B cell (primary cell): ENCODE measurements at regions of chr19 and their contacts with region 1.

Region 1: GRCh38 chr19:15177269-15178116 is 23.3 kb downstream of the NOTCH3 start:
- DNase-seq: peak; percentile 91
- ATAC-seq: peak; percentile 100
- H3K4me3 ChIP-seq: no peak overlapping the region
- H3K4me3 Mint-ChIP-seq: peak overlapping the region; percentile 59
- H3K27ac ChIP-seq: no peak overlapping the region
- H3K27ac Mint-ChIP-seq: peak overlapping the region; percentile 22
- H3K4me1 ChIP-seq: peaks cover 4 to 6% of the 10 kb centered on the region in 2 donors
- H3K4me1 Mint-ChIP-seq: peaks cover 7% of the 10 kb centered on the region
- H3K27me3 ChIP-seq: peaks cover 0 to 22% (median 4%) of the 10 kb centered on the region in 4 experiments
- H3K27me3 Mint-ChIP-seq: peaks cover 24% of the 10 kb centered on the region
- CTCF ChIP-seq: peak; percentile 90

Region 2: DNA sequence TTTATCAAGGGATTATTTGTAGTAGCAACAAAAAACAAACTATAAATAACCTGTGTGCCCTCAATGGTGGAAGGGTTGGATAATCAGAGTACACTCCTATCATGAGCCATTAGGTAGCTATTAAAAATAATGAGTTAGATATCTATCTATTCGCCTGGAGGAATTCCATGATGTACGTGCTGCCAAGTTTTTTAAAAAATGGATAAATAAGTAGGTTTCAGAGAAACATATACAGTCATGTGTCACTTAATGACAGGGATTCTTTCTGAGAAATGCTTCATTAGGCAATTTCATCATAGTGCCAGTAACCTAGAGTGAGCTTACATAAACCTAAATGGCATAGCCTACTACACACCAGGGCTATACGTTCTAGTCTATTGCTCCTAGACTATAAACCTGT is 101.7 kb before region 1 on chr19:
- CTCF ChIA-PET with region 1: no interaction called
- POLR2A ChIA-PET with region 1: no interaction called
- intact Hi-C with region 1: no loop called
- DNase-seq: no peak
- ATAC-seq: no peak
- H3K4me3 ChIP-seq: no peak overlapping the region
- H3K4me3 Mint-ChIP-seq: no peak overlapping the region
- H3K27ac ChIP-seq: no peak overlapping the region
- H3K27ac Mint-ChIP-seq: no peak overlapping the region
- H3K4me1 ChIP-seq: no peaks in the 10 kb centered on the region
- H3K4me1 Mint-ChIP-seq: no peaks in the 10 kb centered on the region
- H3K27me3 ChIP-seq: peaks cover 0 to 7% (median 0%) of the 10 kb centered on the region in 4 experiments
- H3K27me3 Mint-ChIP-seq: peaks cover 10% of the 10 kb centered on the region
- CTCF ChIP-seq: no peak

Region 3: DNA sequence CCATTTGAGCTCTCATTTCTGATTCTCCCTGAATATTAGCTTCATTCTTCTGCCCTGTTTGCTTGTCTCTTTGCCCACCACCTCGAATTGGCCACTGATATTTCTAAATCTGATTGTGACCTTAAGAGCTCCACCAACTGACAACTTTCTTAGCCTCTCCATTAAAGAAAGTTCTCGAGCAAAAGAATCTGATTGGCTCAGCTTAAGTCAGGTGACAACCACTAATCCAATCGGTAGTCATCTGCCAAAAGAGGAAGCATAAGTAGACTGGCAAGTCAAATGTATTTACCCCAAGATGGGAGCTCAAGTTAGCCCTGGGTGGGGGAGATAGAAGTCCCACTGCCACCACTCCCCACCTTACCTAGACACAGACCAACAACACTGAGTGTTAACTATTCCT is 18.2 kb before region 1 on chr19:
- CTCF ChIA-PET with region 1: interaction called, 7 read pairs
- POLR2A ChIA-PET with region 1: interaction called, 10 read pairs
- intact Hi-C with region 1: no loop called
- DNase-seq: no peak
- ATAC-seq: no peak
- H3K4me3 ChIP-seq: no peak overlapping the region
- H3K4me3 Mint-ChIP-seq: no peak overlapping the region
- H3K27ac ChIP-seq: no peak overlapping the region
- H3K27ac Mint-ChIP-seq: no peak overlapping the region
- H3K4me1 ChIP-seq: no peaks in the 10 kb centered on the region
- H3K4me1 Mint-ChIP-seq: no peaks in the 10 kb centered on the region
- H3K27me3 ChIP-seq: no peaks in the 10 kb centered on the region
- H3K27me3 Mint-ChIP-seq: peaks cover 10% of the 10 kb centered on the region
- CTCF ChIP-seq: no peak

Region 4: GRCh38 chr19:15222738-15223648 is 45.5 kb after region 1 on chr19:
- CTCF ChIA-PET with region 1: no interaction called
- POLR2A ChIA-PET with region 1: interaction called, 10 read pairs
- intact Hi-C with region 1: no loop called
- DNase-seq: peak; percentile 89
- ATAC-seq: peak; percentile 99
- H3K4me3 ChIP-seq: peak overlapping the region; percentile 30 to 70 (median 57)
- H3K4me3 Mint-ChIP-seq: peak overlapping the region; percentile 91
- H3K27ac ChIP-seq: no peak overlapping the region
- H3K27ac Mint-ChIP-seq: peak overlapping the region; percentile 53
- H3K4me1 ChIP-seq: peaks cover 16 to 17% of the 10 kb centered on the region in 2 donors
- H3K4me1 Mint-ChIP-seq: peaks cover 18% of the 10 kb centered on the region
- H3K27me3 ChIP-seq: peaks cover 0 to 19% (median 5%) of the 10 kb centered on the region in 4 experiments
- H3K27me3 Mint-ChIP-seq: peaks cover 18% of the 10 kb centered on the region
- CTCF ChIP-seq: no peak

Region 5: GRCh38 chr19:15234043-15234873 is 56.8 kb after region 1 on chr19:
- CTCF ChIA-PET with region 1: no interaction called
- POLR2A ChIA-PET with region 1: no interaction called
- intact Hi-C with region 1: loop called (anchors 5 kb)
- DNase-seq: no peak
- ATAC-seq: no peak
- H3K4me3 ChIP-seq: no peak overlapping the region
- H3K4me3 Mint-ChIP-seq: peak overlapping the region; percentile 57
- H3K27ac ChIP-seq: no peak overlapping the region
- H3K27ac Mint-ChIP-seq: no peak overlapping the region
- H3K4me1 ChIP-seq: peaks cover 20 to 28% of the 10 kb centered on the region in 2 donors
- H3K4me1 Mint-ChIP-seq: peaks cover 24% of the 10 kb centered on the region
- H3K27me3 ChIP-seq: peaks cover 0 to 25% (median 8%) of the 10 kb centered on the region in 4 experiments
- H3K27me3 Mint-ChIP-seq: peaks cover 16% of the 10 kb centered on the region
- CTCF ChIP-seq: no peak